Common myeloid progenitor, CD34-positive (primary cell): ENCODE measurements at regions of chrX and their contacts with region 1.

Region 1: GRCh38 chrX:154748712-154749343 is 2.0 kb downstream of the GAB3 start:
- DNase-seq: peak; percentile 59 to 77 (median 72)
- H3K4me3 ChIP-seq: peak overlapping the region in 3 of 7 experiments; percentile 2 to 77 (median 75)
- H3K27ac ChIP-seq: peak overlapping the region in 1 of 2 experiments; percentile 40
- H3K4me1 ChIP-seq: peaks cover 11 to 35% (median 19%) of the 10 kb centered on the region in 4 experiments
- H3K27me3 ChIP-seq: peaks cover 0 to 2% (median 0%) of the 10 kb centered on the region in 5 experiments

Region 2: DNA sequence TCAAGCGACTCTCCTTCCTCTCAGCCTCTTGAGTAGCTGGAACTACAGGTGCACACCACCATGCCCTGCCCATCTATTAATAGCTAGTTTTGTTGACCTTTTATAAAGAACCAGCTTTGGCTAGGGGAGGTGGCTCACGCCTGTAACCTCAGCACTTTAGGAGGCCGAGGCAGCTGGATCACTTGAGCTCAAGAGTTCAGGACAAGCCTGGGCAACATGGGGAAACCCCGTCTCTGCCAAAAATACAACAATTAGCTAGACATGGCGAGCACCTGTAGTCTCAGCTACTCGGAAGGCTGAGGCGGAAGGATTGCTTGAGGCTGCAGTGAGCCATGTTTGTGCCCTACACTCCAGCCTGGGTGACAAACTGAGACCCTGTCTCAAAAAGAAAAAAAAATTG is 450.5 kb before region 1 on chrX:
- CTCF ChIA-PET with region 1: no interaction called
- POLR2A ChIA-PET with region 1: no interaction called
- DNase-seq: no peak
- H3K4me3 ChIP-seq: no peak overlapping the region
- H3K27ac ChIP-seq: no peak overlapping the region
- H3K4me1 ChIP-seq: no peaks in the 10 kb centered on the region
- H3K27me3 ChIP-seq: no peaks in the 10 kb centered on the region

Region 3: GRCh38 chrX:154717824-154718223 is 31.0 kb before region 1 on chrX:
- CTCF ChIA-PET with region 1: interaction called, 69 read pairs
- POLR2A ChIA-PET with region 1: interaction called, 8 read pairs
- DNase-seq: peak; percentile 87 to 94 (median 93)
- H3K4me3 ChIP-seq: peak overlapping the region in 5 of 7 experiments; percentile 6 to 55 (median 20)
- H3K27ac ChIP-seq: peak overlapping the region; percentile 49 to 76
- H3K4me1 ChIP-seq: peaks cover 37 to 73% (median 46%) of the 10 kb centered on the region in 4 experiments
- H3K27me3 ChIP-seq: no peaks in the 10 kb centered on the region

Region 4: GRCh38 chrX:154727871-154728270 is 21.0 kb before region 1 on chrX:
- CTCF ChIA-PET with region 1: interaction called, 51 read pairs
- POLR2A ChIA-PET with region 1: no interaction called
- DNase-seq: no peak
- H3K4me3 ChIP-seq: peak overlapping the region in 1 of 7 experiments; percentile 5
- H3K27ac ChIP-seq: peak overlapping the region in 1 of 2 experiments; percentile 36
- H3K4me1 ChIP-seq: peaks cover 43 to 93% (median 62%) of the 10 kb centered on the region in 4 experiments
- H3K27me3 ChIP-seq: no peaks in the 10 kb centered on the region

Region 5: GRCh38 chrX:154762523-154763289 is 13.9 kb after region 1 on chrX and contains the start of gene DKC1:
- CTCF ChIA-PET with region 1: interaction called, 17 read pairs
- POLR2A ChIA-PET with region 1: interaction called, 6 read pairs
- DNase-seq: peak; percentile 94 to 97 (median 97)
- H3K4me3 ChIP-seq: peak within 1 kb of the TSS; percentile 46 to 82 (median 71)
- H3K27ac ChIP-seq: peak within 1 kb of the TSS in 1 of 2 experiments; percentile 76
- H3K4me1 ChIP-seq: peaks cover 5 to 26% (median 10%) of the 10 kb centered on the region in 4 experiments
- H3K27me3 ChIP-seq: no peaks in the 10 kb centered on the region

Region 6: GRCh38 chrX:155279873-155280272 is 531.0 kb after region 1 on chrX:
- CTCF ChIA-PET with region 1: no interaction called
- POLR2A ChIA-PET with region 1: no interaction called
- DNase-seq: no peak
- H3K4me3 ChIP-seq: no peak overlapping the region
- H3K27ac ChIP-seq: no peak overlapping the region
- H3K4me1 ChIP-seq: no peaks in the 10 kb centered on the region
- H3K27me3 ChIP-seq: no peaks in the 10 kb centered on the region